ENCODE measurements at regions of chr17 and their contacts with region 1.

Region 1: GRCh38 chr17:57597531-57598453 is 147.3 kb downstream of the CCDC182 start:
- DNase-seq: peak; percentile 82
- H3K4me3 ChIP-seq: no peak overlapping the region; a peak in 1 of 4 replicates
- H3K27ac ChIP-seq: peak overlapping the region; percentile 48 to 99
- H3K4me1 ChIP-seq: peaks cover 5 to 87% of the 10 kb centered on the region in 2 experiments; a peak in 3 of 4 replicates
- H3K27me3 ChIP-seq: no peaks in the 10 kb centered on the region
- CTCF ChIP-seq: peak; percentile 99
- EP300 ChIP-seq: peak; percentile 46 to 99; a peak in 2 of 4 replicates
- RAD21 ChIP-seq: peak; percentile 87

Region 2: GRCh38 chr17:57505841-57506773 is 91.7 kb before region 1 on chr17:
- CTCF ChIA-PET with region 1: interaction called, 16 read pairs
- POLR2A ChIA-PET with region 1: no interaction called
- DNase-seq: peak; percentile 75
- H3K4me3 ChIP-seq: no peak overlapping the region
- H3K27ac ChIP-seq: peak overlapping the region; percentile 36 to 99; a peak in 3 of 4 replicates
- H3K4me1 ChIP-seq: peaks cover 21 to 78% of the 10 kb centered on the region in 2 experiments
- H3K27me3 ChIP-seq: no peaks in the 10 kb centered on the region
- CTCF ChIP-seq: no peak
- EP300 ChIP-seq: peak in 1 of 2 experiments; percentile 46; a peak in 1 of 4 replicates
- RAD21 ChIP-seq: peak; percentile 35

Region 3: DNA sequence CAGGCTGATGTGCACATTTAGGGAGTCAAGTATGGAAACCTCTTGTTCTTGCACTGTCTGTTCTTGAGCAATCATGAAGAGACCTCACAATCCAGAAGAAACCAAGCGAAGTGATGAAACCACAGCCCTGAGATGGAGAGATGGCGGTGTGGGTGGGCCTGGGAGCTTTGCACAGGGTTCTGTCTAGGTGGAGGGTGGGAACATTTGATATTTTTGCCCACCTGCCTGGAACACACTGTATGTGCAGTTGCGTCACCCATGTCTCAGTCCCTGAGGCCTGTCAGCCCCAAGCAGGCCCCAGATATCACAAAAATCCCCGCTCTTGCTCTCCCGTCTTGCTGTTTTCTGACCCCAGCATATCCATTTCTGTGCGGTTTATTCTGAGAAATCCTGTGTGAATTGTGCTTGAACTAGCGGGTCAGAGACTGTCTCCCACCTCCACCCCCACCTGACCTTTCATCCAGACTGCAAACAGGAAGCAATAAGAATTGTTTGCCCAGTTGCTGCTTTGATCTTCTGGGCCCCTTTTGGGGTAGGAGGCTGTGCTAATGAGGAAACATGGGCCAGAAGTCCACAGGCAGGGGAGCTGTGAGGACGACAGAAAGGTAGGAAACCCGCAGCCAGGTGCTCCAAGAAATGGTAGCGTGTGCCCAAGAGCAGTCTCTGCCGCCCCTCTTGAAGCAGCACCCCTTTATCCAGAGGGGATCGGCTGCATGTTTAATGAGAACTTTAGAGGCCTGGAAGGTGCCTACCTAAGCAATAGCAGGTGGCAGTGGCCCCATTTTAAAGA is 36.5 kb before region 1 on chr17:
- CTCF ChIA-PET with region 1: interaction called, 74 read pairs
- POLR2A ChIA-PET with region 1: interaction called, 19 read pairs
- DNase-seq: no peak
- H3K4me3 ChIP-seq: no peak overlapping the region
- H3K27ac ChIP-seq: peak overlapping the region in 1 of 2 experiments; percentile 99; a peak in 2 of 4 replicates
- H3K4me1 ChIP-seq: peaks cover 10 to 94% of the 10 kb centered on the region in 2 experiments; a peak in 3 of 4 replicates
- H3K27me3 ChIP-seq: no peaks in the 10 kb centered on the region
- CTCF ChIP-seq: no peak
- EP300 ChIP-seq: no peak
- RAD21 ChIP-seq: no peak

Region 4: GRCh38 chr17:57615836-57616757 is 18.3 kb after region 1 on chr17:
- CTCF ChIA-PET with region 1: interaction called, 80 read pairs
- POLR2A ChIA-PET with region 1: interaction called, 7 read pairs
- DNase-seq: no peak
- H3K4me3 ChIP-seq: no peak overlapping the region
- H3K27ac ChIP-seq: peak overlapping the region in 1 of 2 experiments; percentile 2; a peak in 1 of 4 replicates
- H3K4me1 ChIP-seq: peaks cover 23 to 37% of the 10 kb centered on the region in 2 experiments; a peak in 3 of 4 replicates
- H3K27me3 ChIP-seq: no peaks in the 10 kb centered on the region
- CTCF ChIP-seq: no peak
- EP300 ChIP-seq: no peak
- RAD21 ChIP-seq: no peak

Region 5: DNA sequence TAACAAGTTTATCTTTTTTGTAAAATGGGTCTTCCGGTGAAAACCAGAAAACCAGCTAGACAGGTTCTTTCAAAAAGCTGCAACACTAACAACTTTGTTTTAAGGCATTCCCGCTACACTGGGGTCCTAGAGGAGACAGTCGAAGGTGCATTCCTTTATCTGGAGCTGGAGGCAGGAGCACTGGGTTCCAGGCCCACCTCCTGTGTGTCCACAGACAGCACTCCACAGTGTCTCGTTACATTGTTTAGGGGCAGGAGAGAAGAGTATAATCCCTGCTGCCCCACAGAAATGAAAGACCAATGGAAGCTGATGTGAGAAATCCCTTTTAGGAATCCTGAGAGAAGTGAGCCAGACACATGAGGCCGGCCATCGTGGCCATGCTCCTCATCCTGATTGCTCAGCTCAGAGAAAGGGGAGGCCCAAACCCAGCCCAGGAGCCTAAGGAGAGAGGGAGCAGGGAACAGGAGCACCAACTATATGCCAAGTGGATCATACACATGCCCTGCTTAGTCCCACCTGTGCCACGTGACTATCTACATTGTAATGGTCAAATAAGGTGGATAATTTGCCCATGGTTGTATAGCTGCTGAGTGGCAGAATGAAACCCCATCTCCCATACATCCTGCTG is 87.8 kb after region 1 on chr17:
- CTCF ChIA-PET with region 1: interaction called, 298 read pairs
- POLR2A ChIA-PET with region 1: interaction called, 3 read pairs
- DNase-seq: no peak
- H3K4me3 ChIP-seq: no peak overlapping the region
- H3K27ac ChIP-seq: peak overlapping the region in 1 of 2 experiments; percentile 97; a peak in 2 of 4 replicates
- H3K4me1 ChIP-seq: peaks cover 0 to 32% of the 10 kb centered on the region in 2 experiments; a peak in 2 of 4 replicates
- H3K27me3 ChIP-seq: no peaks in the 10 kb centered on the region
- CTCF ChIP-seq: no peak
- EP300 ChIP-seq: no peak
- RAD21 ChIP-seq: no peak

Region 6: GRCh38 chr17:57761887-57762286 is 164.1 kb after region 1 on chr17:
- CTCF ChIA-PET with region 1: interaction called, 10 read pairs
- POLR2A ChIA-PET with region 1: interaction called, 4 read pairs
- DNase-seq: no peak
- H3K4me3 ChIP-seq: no peak overlapping the region
- H3K27ac ChIP-seq: 0 out of 4 replicates have a peak overlapping the region, but pooled peaks of 1 of the 2 experiments have one; percentile 67
- H3K4me1 ChIP-seq: peaks cover 0 to 39% of the 10 kb centered on the region in 2 experiments; a peak in 2 of 4 replicates
- H3K27me3 ChIP-seq: peaks cover 18% of the 10 kb centered on the region; the same call in 1 of the 2 replicates
- CTCF ChIP-seq: no peak
- EP300 ChIP-seq: no peak
- RAD21 ChIP-seq: no peak

Measured in SK-N-SH (cell line).